Right ventricle myocardium inferior (tissue), 1 donor: ENCODE measurements at regions of chr1 and their contacts with region 1.

Region 1: GRCh38 chr1:179365320-179366092 is at the start of gene AXDND1:
- DNase-seq: peak; percentile 95
- ATAC-seq: peak; percentile 96
- total RNA-seq, gene AXDND1: not detected

Region 2: GRCh38 chr1:179081687-179082332 is 283.7 kb before region 1 on chr1 and contains the start of gene TOR3A:
- intact Hi-C with region 1: loop called (anchors 2 kb)
- DNase-seq: peak; percentile 96
- ATAC-seq: peak; percentile 99
- total RNA-seq, gene TOR3A: 11.3 TPM

Region 3: DNA sequence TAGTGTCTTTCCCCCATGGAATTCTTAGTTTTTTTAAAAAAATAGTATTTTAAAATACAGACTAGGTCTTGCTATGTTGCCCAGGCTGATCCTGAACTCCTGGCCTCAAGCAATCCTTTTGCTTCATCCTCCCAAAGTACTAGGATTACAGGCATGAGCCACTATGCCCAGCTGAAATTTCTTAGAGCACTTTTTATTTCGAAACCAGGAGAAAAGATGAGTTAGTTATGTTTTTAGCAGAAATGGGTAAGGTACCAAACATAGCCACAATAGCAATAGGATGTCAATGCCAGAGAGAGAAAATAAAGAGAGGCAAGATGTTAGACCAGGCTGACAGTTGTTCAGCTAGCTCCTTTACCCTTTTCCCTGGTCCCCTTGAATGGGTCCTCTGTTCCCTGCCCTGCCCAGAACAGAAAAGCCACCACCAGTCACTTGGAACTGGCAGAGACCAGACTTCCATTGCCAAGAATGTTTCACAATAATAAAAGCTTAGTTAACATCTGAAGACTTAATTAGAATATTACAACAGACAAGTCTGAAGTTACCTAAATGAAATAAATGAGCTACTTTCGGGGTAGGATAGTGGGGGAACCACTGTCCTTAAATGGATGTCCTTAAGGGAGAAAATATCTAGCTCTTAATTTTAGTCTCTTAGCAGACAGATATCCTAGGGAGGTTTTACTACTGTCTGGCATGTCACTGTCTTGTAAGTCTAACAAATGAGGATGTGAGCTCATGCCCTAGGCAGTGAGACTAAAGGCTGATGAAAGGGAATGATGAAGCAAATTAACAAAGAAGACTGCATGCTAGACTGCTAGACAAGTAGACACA is 190.3 kb before region 1 on chr1:
- intact Hi-C with region 1: no loop called
- DNase-seq: no peak
- ATAC-seq: peak; percentile 81

Region 4: GRCh38 chr1:179251675-179252074 is 113.8 kb before region 1 on chr1:
- intact Hi-C with region 1: loop called (anchors 2 kb)
- DNase-seq: no peak
- ATAC-seq: peak; percentile 50